ENCODE measurements at regions of chr10 and their contacts with region 1.

Region 1: GRCh38 chr10:59580026-59580863 is 129.4 kb downstream of the SLC16A9 start:
- DNase-seq: peak; percentile 34
- H3K4me3 Mint-ChIP-seq: no peak overlapping the region
- H3K27ac Mint-ChIP-seq: no peak overlapping the region
- H3K4me1 Mint-ChIP-seq: no peaks in the 10 kb centered on the region
- H3K27me3 Mint-ChIP-seq: peaks cover 21% of the 10 kb centered on the region
- CTCF ChIP-seq: peak; percentile 22

Region 2: GRCh38 chr10:59354434-59354833 is 225.8 kb before region 1 on chr10:
- CTCF ChIA-PET with region 1: no interaction called
- POLR2A ChIA-PET with region 1: no interaction called
- intact Hi-C with region 1: no loop called
- DNase-seq: no peak
- H3K4me3 Mint-ChIP-seq: no peak overlapping the region
- H3K27ac Mint-ChIP-seq: no peak overlapping the region
- H3K4me1 Mint-ChIP-seq: no peaks in the 10 kb centered on the region
- H3K27me3 Mint-ChIP-seq: no peaks in the 10 kb centered on the region
- CTCF ChIP-seq: no peak

Region 3: DNA sequence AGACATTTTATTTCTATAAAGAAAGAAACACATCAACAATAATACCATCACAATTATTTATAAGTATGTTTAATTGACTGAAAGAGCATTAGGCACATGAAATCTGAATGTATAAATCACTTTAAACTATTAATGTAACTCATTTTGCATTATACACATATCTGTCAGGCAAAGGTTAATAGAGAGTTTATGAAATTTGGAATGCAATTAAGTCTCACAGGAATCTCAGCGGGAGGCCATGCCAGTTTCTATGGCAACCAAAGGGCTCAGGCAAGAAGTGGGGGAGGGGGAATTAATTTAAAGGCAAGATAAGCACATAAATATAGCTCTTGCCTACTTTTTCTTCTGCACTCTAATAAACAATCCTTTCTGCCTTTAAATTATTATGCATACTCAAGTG is 23.2 kb before region 1 on chr10:
- CTCF ChIA-PET with region 1: interaction called, 11 read pairs
- POLR2A ChIA-PET with region 1: no interaction called
- intact Hi-C with region 1: no loop called
- DNase-seq: no peak
- H3K4me3 Mint-ChIP-seq: no peak overlapping the region
- H3K27ac Mint-ChIP-seq: no peak overlapping the region
- H3K4me1 Mint-ChIP-seq: no peaks in the 10 kb centered on the region
- H3K27me3 Mint-ChIP-seq: peaks cover 63% of the 10 kb centered on the region
- CTCF ChIP-seq: no peak

Measured in MCF 10A (cell line).